ENCODE measurements at regions of chr14 and their contacts with region 1.

Region 1: GRCh38 chr14:76876076-76876475 is 49.9 kb downstream of the LRRC74A start:
- DNase-seq: peak; percentile 68
- H3K4me3 ChIP-seq: no peak overlapping the region
- H3K27ac ChIP-seq: no peak overlapping the region
- H3K27me3 ChIP-seq: peaks cover 2% of the 10 kb centered on the region
- CTCF ChIP-seq: peak; percentile 99

Region 2: DNA sequence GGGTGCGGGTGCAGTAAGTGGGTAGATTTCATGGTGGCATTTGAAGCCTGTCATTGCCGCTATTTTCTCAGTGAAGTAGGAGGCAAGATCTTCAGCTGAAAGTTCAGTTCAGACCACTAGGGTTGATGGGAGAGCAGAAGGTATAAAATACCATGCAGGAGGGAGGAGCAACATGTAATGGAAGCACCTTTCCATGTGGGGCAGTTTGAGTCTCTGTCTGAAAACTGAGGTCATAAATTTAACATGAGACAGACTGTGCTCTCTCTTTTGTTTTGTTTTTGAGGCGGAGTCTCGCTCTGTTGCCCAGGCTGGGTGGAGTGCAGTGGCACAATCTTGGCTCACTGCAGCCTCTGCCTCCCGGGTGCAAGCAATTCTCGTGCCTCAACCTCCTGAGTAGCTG is 27.2 kb before region 1 on chr14:
- CTCF ChIA-PET with region 1: no interaction called
- POLR2A ChIA-PET with region 1: no interaction called
- DNase-seq: no peak
- H3K4me3 ChIP-seq: no peak overlapping the region
- H3K27ac ChIP-seq: no peak overlapping the region
- H3K27me3 ChIP-seq: no peaks in the 10 kb centered on the region
- CTCF ChIP-seq: no peak

Region 3: GRCh38 chr14:76910371-76910890 is 34.4 kb after region 1 on chr14:
- CTCF ChIA-PET with region 1: interaction called, 85 read pairs
- POLR2A ChIA-PET with region 1: no interaction called
- DNase-seq: no peak
- H3K4me3 ChIP-seq: no peak overlapping the region
- H3K27ac ChIP-seq: no peak overlapping the region
- H3K27me3 ChIP-seq: no peaks in the 10 kb centered on the region
- CTCF ChIP-seq: no peak

Region 4: DNA sequence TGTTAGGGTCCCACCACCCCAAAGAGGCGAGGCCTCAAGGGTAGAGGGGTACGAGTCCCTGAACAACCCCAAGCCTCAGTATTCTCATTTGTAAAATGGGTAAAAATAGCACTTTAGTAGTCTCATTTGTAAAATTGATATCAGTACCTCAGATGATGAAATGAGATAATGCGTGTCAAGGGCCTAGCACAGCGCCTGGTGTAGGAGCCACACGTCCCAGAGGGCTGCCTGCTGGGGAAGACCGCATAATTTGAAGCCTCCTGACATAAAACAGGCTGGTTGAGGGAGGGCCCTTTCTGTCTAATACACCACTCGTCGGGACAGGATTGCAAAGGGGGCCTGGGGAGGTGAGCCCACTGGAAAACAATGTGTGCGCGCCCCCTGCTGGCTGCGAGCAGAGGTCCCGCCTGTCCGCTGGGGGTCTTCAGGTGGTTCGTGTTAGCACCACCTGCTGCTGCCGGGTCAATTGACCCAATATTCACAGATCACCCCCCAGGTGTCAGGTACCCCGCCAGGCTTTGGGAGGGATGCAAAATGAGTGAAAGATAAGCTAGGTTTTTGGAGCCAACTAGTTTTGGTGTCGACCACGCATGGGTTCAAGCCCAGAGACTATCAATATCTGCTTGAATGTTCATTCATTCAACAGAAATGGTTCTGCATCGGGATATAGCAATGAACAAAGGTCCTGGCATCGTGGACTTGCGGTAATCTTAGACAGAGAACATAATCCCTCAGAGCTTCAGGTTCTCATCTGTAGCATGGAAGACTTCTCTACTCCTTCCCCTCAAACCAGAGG is 177.2 kb after region 1 on chr14:
- CTCF ChIA-PET with region 1: interaction called, 50 read pairs
- POLR2A ChIA-PET with region 1: no interaction called
- DNase-seq: no peak
- H3K4me3 ChIP-seq: no peak overlapping the region
- H3K27ac ChIP-seq: peak overlapping the region; percentile 21
- H3K27me3 ChIP-seq: no peaks in the 10 kb centered on the region
- CTCF ChIP-seq: peak; percentile 89

Region 5: GRCh38 chr14:77086017-77086736 is 210.1 kb after region 1 on chr14:
- CTCF ChIA-PET with region 1: interaction called, 300 read pairs
- POLR2A ChIA-PET with region 1: no interaction called
- DNase-seq: no peak
- H3K4me3 ChIP-seq: no peak overlapping the region
- H3K27ac ChIP-seq: no peak overlapping the region
- H3K27me3 ChIP-seq: peaks cover 17% of the 10 kb centered on the region
- CTCF ChIP-seq: no peak

Region 6: GRCh38 chr14:77151918-77152588 is 276.0 kb after region 1 on chr14:
- CTCF ChIA-PET with region 1: interaction called, 18 read pairs
- POLR2A ChIA-PET with region 1: no interaction called
- DNase-seq: no peak
- H3K4me3 ChIP-seq: no peak overlapping the region
- H3K27ac ChIP-seq: no peak overlapping the region
- H3K27me3 ChIP-seq: peaks cover 20% of the 10 kb centered on the region
- CTCF ChIP-seq: peak; percentile 27; the same call in 1 of the 2 replicates

Measured in AG04450 (cell line).